CD8-positive, alpha-beta memory T cell (primary cell): ENCODE measurements at regions of chr1 and their contacts with region 1.

Region 1: DNA sequence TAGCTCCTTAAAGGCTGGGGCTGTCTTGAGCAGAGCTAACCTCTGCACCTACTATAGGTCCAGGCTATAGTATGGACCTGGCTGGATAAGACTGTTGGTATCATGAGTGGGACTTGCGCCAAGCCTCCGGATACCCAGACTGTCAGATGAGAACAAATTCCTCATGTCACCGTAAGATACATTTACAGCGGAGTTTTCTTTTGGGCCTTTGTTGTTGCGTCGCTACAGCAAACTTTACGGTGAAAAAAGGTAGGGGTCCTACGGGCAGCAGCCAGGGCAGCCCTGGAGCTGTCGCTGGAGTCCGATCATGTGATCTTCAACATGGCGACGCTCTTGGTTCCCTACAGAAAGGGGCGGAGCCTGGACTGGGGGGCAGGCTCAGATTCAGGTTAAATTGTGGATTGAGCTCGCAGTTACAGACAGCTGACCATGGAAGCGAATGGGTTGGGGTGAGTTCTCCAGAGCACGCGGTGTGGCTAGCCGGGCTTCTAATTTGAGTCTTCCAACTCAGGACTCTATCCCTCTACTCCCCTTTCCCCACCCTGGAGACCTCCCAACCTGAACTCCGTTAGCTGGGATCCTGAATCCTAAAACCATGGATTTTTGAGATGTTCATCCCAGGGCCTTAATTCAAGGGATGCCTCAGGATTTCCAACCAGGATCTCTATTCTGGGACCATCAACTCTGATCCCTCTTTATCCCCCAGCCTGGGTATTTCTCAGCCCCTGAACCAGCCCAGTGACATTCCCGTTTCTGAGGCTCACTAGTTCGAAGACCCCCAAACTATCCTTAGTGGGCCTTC is at the start of gene UROD:
- DNase-seq: peak; percentile 79 to 93 (median 86)
- H3K4me3 ChIP-seq: peak within 1 kb of the TSS; percentile 66
- H3K4me3 Mint-ChIP-seq: peak within 1 kb of the TSS; percentile 89 to 98 (median 96)
- H3K27ac ChIP-seq: peak within 1 kb of the TSS; percentile 74
- H3K27ac Mint-ChIP-seq: peak within 1 kb of the TSS; percentile 86 to 99 (median 98)
- H3K4me1 ChIP-seq: peaks cover 31% of the 10 kb centered on the region
- H3K4me1 Mint-ChIP-seq: peaks cover 35 to 60% (median 55%) of the 10 kb centered on the region in 3 donors
- H3K27me3 ChIP-seq: no peaks in the 10 kb centered on the region
- H3K27me3 Mint-ChIP-seq: no peaks in the 10 kb centered on the region
- total RNA-seq, gene UROD: 89.9 to 92.4 TPM

Region 2: DNA sequence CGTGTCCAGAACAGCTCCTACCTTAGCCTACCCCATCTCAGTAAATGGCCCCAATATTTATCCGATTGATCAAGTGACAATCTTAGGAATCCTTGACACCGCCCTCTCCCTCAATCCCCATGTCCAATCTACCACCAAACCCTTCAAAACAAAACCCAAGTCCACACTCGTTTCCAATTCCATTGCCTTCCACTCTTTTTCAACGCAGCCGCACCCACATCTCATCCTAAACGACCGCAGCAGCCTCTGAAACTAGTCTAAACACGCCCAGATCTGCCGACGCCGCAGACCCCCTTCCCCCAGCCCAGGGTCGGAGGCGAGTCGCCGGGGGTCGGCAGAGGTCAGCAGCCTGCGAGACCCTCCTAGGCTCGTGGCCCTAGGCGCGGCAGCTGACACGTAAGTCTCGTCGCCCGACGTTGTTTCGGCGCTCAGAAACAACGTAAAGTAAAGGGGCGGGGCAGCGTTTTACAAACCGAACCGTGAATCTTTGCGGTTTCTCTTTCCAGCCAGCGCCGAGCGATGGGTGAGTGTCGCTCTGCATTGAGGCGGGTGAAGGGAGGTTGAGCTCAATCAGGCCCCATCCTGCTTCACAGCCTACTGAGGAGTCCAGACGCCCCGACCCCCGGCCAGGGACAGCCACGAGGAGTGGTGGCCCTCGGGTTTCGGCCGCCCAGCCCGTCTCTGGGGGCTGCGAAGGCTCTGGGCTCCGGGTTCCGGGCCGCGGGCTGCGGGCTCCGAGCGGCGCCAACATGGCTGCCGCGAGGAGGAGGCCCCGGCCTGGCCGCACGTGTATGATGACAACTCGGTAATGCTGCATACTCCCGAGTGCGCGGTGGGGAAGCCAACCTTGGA is 236.7 kb before region 1 on chr1 and contains the start of gene RPS8:
- CTCF ChIA-PET with region 1: interaction called, 3 read pairs
- POLR2A ChIA-PET with region 1: interaction called, 15 read pairs
- DNase-seq: peak; percentile 76 to 92 (median 84)
- H3K4me3 ChIP-seq: peak within 1 kb of the TSS; percentile 95
- H3K4me3 Mint-ChIP-seq: peak within 1 kb of the TSS; percentile 90 to 99 (median 94)
- H3K27ac ChIP-seq: peak within 1 kb of the TSS; percentile 92
- H3K27ac Mint-ChIP-seq: peak within 1 kb of the TSS; percentile 93 to 99 (median 97)
- H3K4me1 ChIP-seq: peaks cover 27% of the 10 kb centered on the region
- H3K4me1 Mint-ChIP-seq: peaks cover 39 to 43% (median 42%) of the 10 kb centered on the region in 3 donors
- H3K27me3 ChIP-seq: no peaks in the 10 kb centered on the region
- H3K27me3 Mint-ChIP-seq: no peaks in the 10 kb centered on the region
- total RNA-seq, gene RPS8: 2,426 to 2,465 TPM

Region 3: GRCh38 chr1:44792783-44793714 is 219.0 kb before region 1 on chr1:
- CTCF ChIA-PET with region 1: interaction called, 39 read pairs
- POLR2A ChIA-PET with region 1: interaction called, 4 read pairs
- DNase-seq: no peak
- H3K4me3 ChIP-seq: no peak overlapping the region
- H3K4me3 Mint-ChIP-seq: peak overlapping the region in 1 of 7 donors; percentile 3
- H3K27ac ChIP-seq: no peak overlapping the region
- H3K27ac Mint-ChIP-seq: peak overlapping the region in 5 of 8 donors; percentile 10 to 86 (median 77)
- H3K4me1 ChIP-seq: no peaks in the 10 kb centered on the region
- H3K4me1 Mint-ChIP-seq: peaks cover 0 to 2% (median 1%) of the 10 kb centered on the region in 3 donors
- H3K27me3 ChIP-seq: no peaks in the 10 kb centered on the region
- H3K27me3 Mint-ChIP-seq: no peaks in the 10 kb centered on the region

Region 4: GRCh38 chr1:44807262-44808062 is 204.6 kb before region 1 on chr1 and contains the start of gene DYNLT4:
- CTCF ChIA-PET with region 1: interaction called, 3 read pairs
- POLR2A ChIA-PET with region 1: interaction called, 13 read pairs
- DNase-seq: peak; percentile 84 to 95 (median 90)
- H3K4me3 ChIP-seq: peak within 1 kb of the TSS; percentile 58
- H3K4me3 Mint-ChIP-seq: peak within 1 kb of the TSS; percentile 67 to 90 (median 84)
- H3K27ac ChIP-seq: peak within 1 kb of the TSS; percentile 96
- H3K27ac Mint-ChIP-seq: peak within 1 kb of the TSS; percentile 97 to 100 (median 100)
- H3K4me1 ChIP-seq: peaks cover 77% of the 10 kb centered on the region
- H3K4me1 Mint-ChIP-seq: peaks cover 65 to 80% (median 71%) of the 10 kb centered on the region in 3 donors
- H3K27me3 ChIP-seq: no peaks in the 10 kb centered on the region
- H3K27me3 Mint-ChIP-seq: peaks cover 0 to 6% of the 10 kb centered on the region in 2 donors
- total RNA-seq, gene DYNLT4: 0.28 to 0.31 TPM

Region 5: DNA sequence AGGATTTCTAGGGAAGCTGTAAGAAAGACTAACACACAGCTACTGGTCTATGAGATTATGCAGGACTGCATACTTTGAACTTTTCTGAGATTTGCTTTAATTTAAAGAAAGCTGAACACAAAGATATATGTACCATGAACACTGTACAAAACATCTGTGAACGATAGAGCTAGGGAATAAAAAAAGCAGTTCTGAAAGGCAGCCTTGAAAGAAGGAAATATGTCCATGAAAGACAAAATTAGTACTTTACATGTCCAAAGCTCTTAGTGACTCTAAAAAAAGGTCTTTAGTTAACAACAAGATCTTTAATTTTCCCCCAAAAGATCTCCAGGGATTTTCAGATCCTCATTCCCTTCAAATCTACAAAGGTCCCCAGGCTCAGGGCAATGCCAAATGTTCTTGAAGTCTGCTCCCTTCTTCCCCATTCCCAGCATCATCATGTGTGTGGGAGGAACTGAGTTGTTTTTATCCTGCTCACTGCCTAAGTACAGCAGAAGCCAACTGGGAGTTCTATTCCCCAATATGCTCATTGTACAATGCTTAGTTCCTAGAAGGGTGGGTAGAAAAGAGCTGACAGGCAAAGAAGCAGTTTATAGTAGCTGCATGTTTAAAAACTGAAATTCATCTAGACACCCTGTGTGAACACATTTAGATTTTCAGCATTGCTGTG is 108.9 kb before region 1 on chr1:
- CTCF ChIA-PET with region 1: no interaction called
- POLR2A ChIA-PET with region 1: no interaction called
- DNase-seq: no peak
- H3K4me3 ChIP-seq: no peak overlapping the region
- H3K4me3 Mint-ChIP-seq: no peak overlapping the region
- H3K27ac ChIP-seq: no peak overlapping the region
- H3K27ac Mint-ChIP-seq: no peak overlapping the region
- H3K4me1 ChIP-seq: no peaks in the 10 kb centered on the region
- H3K4me1 Mint-ChIP-seq: peaks cover 0 to 5% (median 0%) of the 10 kb centered on the region in 3 donors
- H3K27me3 ChIP-seq: no peaks in the 10 kb centered on the region
- H3K27me3 Mint-ChIP-seq: no peaks in the 10 kb centered on the region

Region 6: DNA sequence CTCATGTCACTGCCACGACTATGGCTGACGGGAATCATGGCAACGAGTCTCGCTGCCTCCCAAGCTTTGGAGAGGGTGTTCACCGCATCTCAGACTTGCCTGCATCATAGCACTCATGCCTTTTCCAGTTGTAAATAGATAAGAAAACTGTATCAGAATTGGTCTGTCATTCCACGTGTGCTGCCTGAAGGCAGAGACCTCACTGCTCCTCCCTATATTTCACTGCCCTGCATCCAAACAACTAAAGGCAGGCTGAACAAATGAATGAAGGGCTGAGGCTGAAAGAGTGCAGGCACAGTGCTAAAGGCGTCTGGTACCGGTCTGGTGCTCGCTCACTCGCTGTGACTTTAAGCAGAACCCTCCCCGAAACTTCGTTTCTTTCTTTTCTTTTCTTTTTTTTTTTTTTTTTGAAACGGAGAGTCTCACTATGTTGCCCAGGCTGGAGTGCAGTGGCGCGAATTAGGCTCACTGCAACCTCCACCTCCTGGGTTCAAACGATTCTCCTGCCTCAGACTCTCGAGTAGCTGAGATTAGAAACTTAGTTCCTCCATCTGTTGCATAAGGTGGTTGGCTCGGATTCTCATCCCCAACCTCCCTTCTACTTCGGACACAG is 26.2 kb before region 1 on chr1:
- CTCF ChIA-PET with region 1: interaction called, 10 read pairs
- POLR2A ChIA-PET with region 1: interaction called, 11 read pairs
- DNase-seq: no peak
- H3K4me3 ChIP-seq: peak overlapping the region; percentile 79
- H3K4me3 Mint-ChIP-seq: peak overlapping the region; percentile 88 to 99 (median 99)
- H3K27ac ChIP-seq: peak overlapping the region; percentile 69
- H3K27ac Mint-ChIP-seq: peak overlapping the region; percentile 26 to 98 (median 94)
- H3K4me1 ChIP-seq: peaks cover 15% of the 10 kb centered on the region
- H3K4me1 Mint-ChIP-seq: peaks cover 24 to 35% (median 25%) of the 10 kb centered on the region in 3 donors
- H3K27me3 ChIP-seq: no peaks in the 10 kb centered on the region
- H3K27me3 Mint-ChIP-seq: no peaks in the 10 kb centered on the region

Region 7: DNA sequence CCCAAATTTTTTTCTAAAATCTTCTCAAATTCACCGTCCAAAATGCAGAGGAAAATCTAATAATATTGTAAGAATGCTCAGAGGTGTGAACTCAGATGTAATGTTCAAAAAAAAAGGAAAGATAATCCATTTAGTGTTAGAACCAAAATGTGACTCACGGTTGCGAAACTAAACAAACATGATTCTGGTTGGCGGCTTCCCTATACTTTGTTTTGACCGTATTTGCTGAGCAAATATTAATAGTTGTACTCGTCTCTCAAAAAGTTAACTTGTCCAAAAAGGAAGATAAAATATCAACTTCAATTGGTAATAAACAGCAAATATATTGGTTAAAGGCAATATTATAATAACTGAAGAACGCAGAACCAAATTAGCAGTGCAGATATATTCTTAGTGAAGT is 160.0 kb after region 1 on chr1:
- CTCF ChIA-PET with region 1: no interaction called
- POLR2A ChIA-PET with region 1: no interaction called
- DNase-seq: no peak
- H3K4me3 ChIP-seq: no peak overlapping the region
- H3K4me3 Mint-ChIP-seq: no peak overlapping the region
- H3K27ac ChIP-seq: no peak overlapping the region
- H3K27ac Mint-ChIP-seq: no peak overlapping the region
- H3K4me1 ChIP-seq: no peaks in the 10 kb centered on the region
- H3K4me1 Mint-ChIP-seq: peaks cover 0 to 13% (median 5%) of the 10 kb centered on the region in 3 donors
- H3K27me3 ChIP-seq: no peaks in the 10 kb centered on the region
- H3K27me3 Mint-ChIP-seq: peaks cover 0 to 4% of the 10 kb centered on the region in 2 donors

Region 8: GRCh38 chr1:45339789-45340570 is 327.9 kb after region 1 on chr1 and contains the starts of genes MUTYH and TOE1:
- CTCF ChIA-PET with region 1: interaction called, 29 read pairs
- POLR2A ChIA-PET with region 1: interaction called, 30 read pairs
- DNase-seq: peak; percentile 84 to 92 (median 89)
- H3K4me3 ChIP-seq: peak within 1 kb of the TSS; percentile 99
- H3K4me3 Mint-ChIP-seq: peak within 1 kb of the TSS; percentile 99 to 100 (median 100)
- H3K27ac ChIP-seq: peak within 1 kb of the TSS; percentile 99
- H3K27ac Mint-ChIP-seq: peak within 1 kb of the TSS; percentile 97 to 99 (median 99)
- H3K4me1 ChIP-seq: peaks cover 43% of the 10 kb centered on the region
- H3K4me1 Mint-ChIP-seq: peaks cover 48 to 68% (median 61%) of the 10 kb centered on the region in 3 donors
- H3K27me3 ChIP-seq: no peaks in the 10 kb centered on the region
- H3K27me3 Mint-ChIP-seq: no peaks in the 10 kb centered on the region
- total RNA-seq, gene MUTYH: 70.1 to 75.4 TPM
- total RNA-seq, gene TOE1: 46.4 to 48.9 TPM

Region 9: GRCh38 chr1:45385302-45385701 is 373.3 kb after region 1 on chr1:
- CTCF ChIA-PET with region 1: no interaction called
- POLR2A ChIA-PET with region 1: no interaction called
- DNase-seq: no peak
- H3K4me3 ChIP-seq: no peak overlapping the region
- H3K4me3 Mint-ChIP-seq: no peak overlapping the region
- H3K27ac ChIP-seq: no peak overlapping the region
- H3K27ac Mint-ChIP-seq: no peak overlapping the region
- H3K4me1 ChIP-seq: no peaks in the 10 kb centered on the region
- H3K4me1 Mint-ChIP-seq: no peaks in the 10 kb centered on the region
- H3K27me3 ChIP-seq: no peaks in the 10 kb centered on the region
- H3K27me3 Mint-ChIP-seq: no peaks in the 10 kb centered on the region